ENCODE measurements at regions of chr2 and their contacts with region 1.

Region 1: DNA sequence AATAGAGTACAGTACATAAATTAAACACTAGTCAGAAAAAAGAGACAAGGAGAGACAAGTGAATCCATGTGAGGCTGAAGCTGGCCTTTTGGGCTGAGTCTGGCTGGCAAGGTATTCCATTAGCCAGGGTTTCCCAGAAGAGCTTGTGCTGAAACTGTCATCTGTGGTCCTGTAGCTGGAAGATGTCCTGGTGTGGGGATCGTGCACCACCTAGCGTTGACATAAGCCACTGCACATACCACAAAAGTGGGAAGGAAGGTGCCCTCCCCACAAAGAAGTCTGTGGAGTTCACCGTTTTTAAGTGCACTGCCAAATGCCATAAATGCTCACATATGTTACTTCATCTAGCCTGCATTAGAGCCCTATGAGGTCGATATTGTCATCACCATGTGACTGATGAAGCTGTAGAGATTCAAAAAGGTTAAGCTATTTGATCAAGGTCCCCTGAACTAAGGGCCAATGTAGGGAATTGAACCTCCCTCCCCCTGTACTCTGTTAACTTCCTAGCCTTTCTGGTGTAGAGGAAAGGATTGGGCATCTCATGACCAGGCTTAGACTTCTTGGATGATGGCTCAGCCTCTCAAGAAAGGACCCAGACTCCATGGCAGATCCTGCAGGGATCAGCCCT is 31.9 kb upstream of the GALNT14 start:
- DNase-seq: peak; percentile 55 to 84 (median 67)
- H3K4me3 ChIP-seq: no peak overlapping the region
- H3K27ac ChIP-seq: no peak overlapping the region
- H3K4me1 ChIP-seq: no peaks in the 10 kb centered on the region
- H3K27me3 ChIP-seq: no peaks in the 10 kb centered on the region
- CTCF ChIP-seq: peak; percentile 83 to 95 (median 90)
- POLR2A ChIP-seq: no peak

Region 2: DNA sequence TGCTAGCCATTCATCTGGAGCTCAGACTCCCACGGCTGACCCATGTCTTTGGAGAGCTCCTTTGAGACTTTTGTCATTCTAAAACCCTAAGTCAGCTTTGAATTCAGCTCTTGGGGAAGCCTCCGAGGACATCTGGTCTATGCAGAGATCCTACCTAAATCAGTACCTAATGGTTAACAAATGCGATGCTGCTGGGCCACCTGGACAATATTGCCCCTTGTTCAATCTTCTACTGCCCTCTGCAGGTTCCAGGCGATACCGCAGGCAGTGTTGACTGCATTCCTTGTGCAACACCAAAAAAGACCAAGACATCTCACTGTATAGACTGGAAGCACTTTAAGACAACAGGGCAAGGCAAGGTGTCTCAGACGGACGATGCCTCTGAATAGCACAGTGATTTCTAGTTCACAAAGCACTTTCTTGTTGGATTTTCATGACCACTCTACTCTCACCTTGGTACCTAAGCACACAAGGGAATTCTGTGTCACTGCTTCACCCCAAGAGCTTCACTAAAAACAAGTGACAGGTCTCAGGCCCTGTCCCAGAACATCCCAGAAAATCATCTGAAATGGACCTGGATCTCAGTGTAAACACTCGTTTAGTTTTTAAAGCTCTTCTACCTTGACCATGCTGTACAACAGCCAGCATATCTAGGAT is 163.5 kb after region 1 on chr2:
- intact Hi-C with region 1: loop called in 1 of 2 experiments (anchors 10 kb)
- DNase-seq: peak; percentile 65 to 93 (median 83)
- H3K4me3 ChIP-seq: no peak overlapping the region
- H3K27ac ChIP-seq: no peak overlapping the region
- H3K4me1 ChIP-seq: no peaks in the 10 kb centered on the region
- H3K27me3 ChIP-seq: no peaks in the 10 kb centered on the region
- CTCF ChIP-seq: peak; percentile 78 to 94 (median 92)
- POLR2A ChIP-seq: no peak

Region 3: DNA sequence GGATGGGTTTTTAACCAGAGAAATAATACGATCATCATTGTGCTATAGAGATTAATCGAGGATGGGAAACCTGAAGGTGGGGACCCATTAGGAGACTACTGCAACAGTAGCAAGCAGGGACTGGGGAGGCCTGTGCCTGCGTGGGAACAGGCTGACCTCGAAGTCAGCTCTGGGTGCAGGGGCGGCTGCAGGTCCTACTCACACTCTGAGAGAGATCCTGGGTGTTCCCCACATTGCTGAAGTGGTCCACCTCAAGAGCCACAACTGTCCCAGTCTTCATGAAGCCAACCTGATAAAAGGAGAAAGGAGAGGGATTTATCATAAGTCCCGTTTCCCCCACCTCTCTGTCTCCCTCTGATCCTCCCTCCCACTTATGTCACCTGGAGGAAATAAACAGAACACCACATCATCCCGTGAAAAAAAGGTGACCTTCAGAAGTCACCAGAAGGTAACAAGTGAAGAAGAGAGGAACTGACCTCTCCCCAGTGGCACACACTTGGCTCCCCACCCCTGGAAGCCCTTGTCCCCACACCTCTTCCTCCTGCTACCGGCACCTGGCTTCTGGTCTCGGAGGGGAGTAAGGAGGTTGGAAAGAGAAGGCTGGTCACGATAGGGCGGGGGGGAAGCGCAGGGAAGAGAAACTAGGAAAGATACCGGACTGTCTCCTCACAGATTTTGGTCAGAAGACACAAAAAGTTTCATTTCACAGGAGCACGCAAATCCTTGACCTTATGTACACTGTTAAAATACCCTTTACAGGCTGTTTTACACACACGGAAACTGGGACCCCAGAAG is 194.0 kb after region 1 on chr2:
- intact Hi-C with region 1: no loop called
- DNase-seq: no peak
- H3K4me3 ChIP-seq: no peak overlapping the region
- H3K27ac ChIP-seq: no peak overlapping the region
- H3K4me1 ChIP-seq: no peaks in the 10 kb centered on the region
- H3K27me3 ChIP-seq: no peaks in the 10 kb centered on the region
- CTCF ChIP-seq: no peak
- POLR2A ChIP-seq: no peak